ENCODE measurements at regions of chr3 and their contacts with region 1.

Region 1: DNA sequence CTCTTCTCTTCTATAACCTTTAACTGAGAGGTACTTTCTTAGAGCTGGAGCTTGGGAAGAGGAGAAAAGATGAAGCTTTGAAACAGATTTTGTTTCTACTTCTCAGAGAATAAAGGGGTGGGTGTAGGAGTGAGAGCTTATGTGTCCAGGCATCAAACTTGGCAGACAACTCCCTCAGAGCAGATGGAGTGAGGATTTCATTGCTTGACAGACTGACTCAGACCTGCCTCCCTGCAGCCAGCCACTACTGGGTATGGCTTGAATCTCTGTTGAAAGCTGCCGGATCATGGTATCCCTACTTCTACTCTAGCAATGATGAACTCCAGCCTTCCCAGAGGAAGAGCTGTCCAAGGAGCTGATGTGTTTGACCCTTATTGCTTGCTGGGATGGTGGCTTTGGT is 36.7 kb downstream of the SYN2 start:
- DNase-seq: no peak
- H3K4me3 ChIP-seq: no peak overlapping the region
- H3K27ac ChIP-seq: no peak overlapping the region
- H3K4me1 ChIP-seq: no peaks in the 10 kb centered on the region
- CTCF ChIP-seq: no peak

Region 2: DNA sequence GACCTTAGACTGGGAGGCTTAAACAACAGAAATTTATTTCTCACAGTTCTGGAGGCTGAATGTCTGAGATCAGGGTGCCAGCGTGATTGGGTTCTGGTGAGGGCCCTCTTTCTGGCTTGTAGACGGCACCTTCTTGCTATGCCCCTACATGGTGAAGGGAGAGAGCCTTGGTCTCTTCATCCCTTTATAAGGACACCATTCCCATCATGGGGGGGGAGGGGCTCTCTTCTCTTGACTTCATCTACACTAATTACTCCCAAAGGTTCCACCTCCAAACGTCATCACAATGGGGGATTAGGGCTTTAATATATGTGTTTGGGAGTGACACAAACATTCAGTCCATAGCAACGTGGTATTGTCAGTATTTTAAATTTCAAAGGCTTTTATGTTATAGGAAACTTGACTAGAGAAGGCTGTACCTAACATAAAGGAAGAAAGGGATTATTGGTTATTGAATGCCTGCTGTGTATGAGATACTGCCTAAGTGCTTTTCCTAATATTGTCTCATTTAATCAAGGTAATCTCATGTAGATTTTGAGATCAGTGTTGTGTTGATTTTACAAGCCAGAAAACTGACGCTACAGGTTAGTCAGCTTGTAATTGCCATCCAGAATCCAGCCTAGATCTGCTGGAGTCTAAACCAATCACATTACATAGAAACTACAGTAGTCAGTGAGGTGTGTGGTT is 15.8 kb before region 1 on chr3:
- CTCF ChIA-PET with region 1: no interaction called
- POLR2A ChIA-PET with region 1: no interaction called
- intact Hi-C with region 1: loop called (anchors 1 kb)
- DNase-seq: no peak
- H3K4me3 ChIP-seq: no peak overlapping the region
- H3K27ac ChIP-seq: no peak overlapping the region
- H3K4me1 ChIP-seq: no peaks in the 10 kb centered on the region
- CTCF ChIP-seq: no peak

Region 3: GRCh38 chr3:12273045-12273695 is 232.3 kb after region 1 on chr3:
- CTCF ChIA-PET with region 1: no interaction called
- POLR2A ChIA-PET with region 1: no interaction called
- intact Hi-C with region 1: no loop called
- DNase-seq: peak; percentile 19
- H3K4me3 ChIP-seq: no peak overlapping the region
- H3K27ac ChIP-seq: no peak overlapping the region
- H3K4me1 ChIP-seq: peaks cover 10% of the 10 kb centered on the region
- CTCF ChIP-seq: no peak